Right ventricle myocardium superior (tissue), 1 donor: ENCODE measurements at regions of chr11 and their contacts with region 1.

Region 1: GRCh38 chr11:17504330-17505107 is 27.9 kb upstream of the ABCC8 start:
- DNase-seq: peak; percentile 87
- ATAC-seq: peak; percentile 85

Region 2: DNA sequence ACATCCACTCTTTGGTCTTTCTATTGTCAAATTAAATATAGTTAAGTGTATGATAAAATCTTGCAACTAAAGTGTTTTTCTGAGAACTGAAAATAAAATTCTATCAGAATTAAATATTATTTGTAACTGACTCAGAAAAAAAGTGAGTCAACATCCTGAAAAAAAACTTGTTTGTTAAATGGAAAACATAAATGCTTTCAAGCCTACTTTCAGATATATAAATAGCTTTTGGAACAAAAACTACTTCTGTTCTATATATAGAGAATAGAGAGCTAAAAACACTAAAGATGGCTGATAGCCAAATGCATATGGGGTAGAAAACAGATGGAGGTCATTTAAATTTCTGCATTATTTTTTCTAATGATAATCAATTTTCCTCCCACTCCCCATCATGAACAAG is 358.5 kb before region 1 on chr11:
- intact Hi-C with region 1: no loop called
- DNase-seq: no peak
- ATAC-seq: no peak

Region 3: DNA sequence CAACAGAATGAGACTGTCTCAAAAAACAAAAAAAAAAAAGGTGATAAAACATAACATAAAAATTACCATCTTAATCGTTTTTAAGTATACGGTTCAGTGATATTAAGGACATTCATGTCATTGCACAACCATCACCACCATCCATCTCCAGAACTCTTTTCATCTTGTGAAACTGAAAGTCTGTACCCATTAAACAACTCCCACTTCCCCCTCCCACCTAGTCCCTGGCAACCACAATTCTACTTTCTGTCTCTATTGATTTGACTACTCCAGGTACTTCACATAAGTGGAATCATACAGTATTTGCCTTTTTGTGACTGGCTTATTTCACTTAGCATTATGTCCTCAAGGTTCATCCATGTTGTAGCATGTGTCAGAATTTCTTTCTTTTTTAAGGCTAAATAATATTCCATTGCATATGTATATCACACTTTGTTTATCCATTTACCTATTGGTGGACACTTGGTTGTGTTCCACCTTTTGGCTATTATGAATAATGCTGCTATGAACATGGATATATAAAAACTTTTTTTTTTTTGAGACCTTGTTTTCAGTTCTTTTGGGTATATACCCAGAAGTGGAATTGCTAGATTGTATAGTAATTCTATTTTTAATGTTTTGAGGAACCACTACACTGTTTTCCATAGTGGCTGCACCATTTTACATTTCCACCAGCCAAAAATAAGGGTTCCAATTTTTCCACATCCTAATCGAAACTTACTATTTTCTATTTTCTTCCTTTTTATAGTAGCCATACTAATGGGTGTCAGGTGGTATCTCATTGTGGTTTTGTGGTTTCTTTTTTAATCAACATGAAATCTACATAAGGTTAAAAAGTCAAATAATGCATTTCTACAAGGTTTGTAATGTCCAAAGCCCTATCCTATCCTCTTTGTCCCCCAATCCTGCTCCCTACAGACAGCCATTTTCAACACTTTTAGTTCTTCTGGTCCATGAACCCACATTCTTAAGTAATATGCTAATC is 273.4 kb before region 1 on chr11:
- intact Hi-C with region 1: loop called (anchors 5 kb)
- DNase-seq: no peak
- ATAC-seq: no peak

Region 4: GRCh38 chr11:17384002-17384511 is 120.5 kb before region 1 on chr11:
- intact Hi-C with region 1: loop called (anchors 1 kb)
- DNase-seq: peak; percentile 84
- ATAC-seq: peak; percentile 54